ENCODE measurements at regions of chr16 and their contacts with region 1.

Region 1: GRCh38 chr16:69166221-69166833 is 20.6 kb upstream of the SNTB2 start:
- DNase-seq: peak; percentile 67
- ATAC-seq: peak; percentile 96
- H3K4me3 Mint-ChIP-seq: no peak overlapping the region
- H3K27ac Mint-ChIP-seq: peak overlapping the region; percentile 78
- H3K4me1 Mint-ChIP-seq: peaks cover 27% of the 10 kb centered on the region
- H3K27me3 Mint-ChIP-seq: no peaks in the 10 kb centered on the region

Region 2: DNA sequence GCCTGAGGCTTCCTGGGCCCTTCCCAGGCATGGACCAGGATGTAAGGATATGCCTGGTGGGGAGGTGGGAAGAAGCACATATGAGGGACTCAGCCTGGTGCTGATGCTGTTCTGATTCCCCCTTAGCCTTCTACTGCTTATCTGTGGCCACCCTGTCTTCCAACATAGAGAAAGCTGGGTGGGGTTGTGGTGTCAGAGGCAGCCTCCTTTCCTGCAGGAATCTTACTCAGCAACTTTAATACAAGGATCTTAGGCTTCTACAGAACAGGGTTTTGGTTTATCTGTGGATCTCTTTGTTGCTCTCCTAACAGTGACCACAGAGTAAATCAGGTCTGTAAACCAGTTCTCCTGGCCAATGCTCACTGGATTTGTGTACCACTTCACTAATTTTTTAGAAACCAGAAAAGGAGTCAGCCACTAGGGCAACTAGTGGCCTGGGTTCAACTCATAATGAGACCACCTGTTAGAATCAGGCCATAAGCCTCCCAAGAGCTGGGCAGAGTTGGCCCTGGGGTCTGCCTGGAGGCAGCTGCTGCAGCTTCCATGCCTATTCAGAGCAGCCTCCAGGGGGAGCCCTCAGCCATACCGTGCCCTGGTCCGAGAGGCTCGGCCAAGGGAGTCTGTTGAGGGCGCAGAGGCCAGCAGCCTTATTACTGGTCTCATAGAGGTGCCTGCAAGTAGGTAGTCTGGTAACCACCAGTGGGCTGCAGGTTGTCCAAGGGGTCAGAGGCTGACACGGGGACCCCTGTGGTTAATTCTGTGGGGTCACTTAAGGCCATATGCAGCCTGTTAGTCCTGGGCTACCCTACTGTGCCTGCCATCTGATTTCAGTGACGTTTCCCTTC is 53.8 kb before region 1 on chr16:
- CTCF ChIA-PET with region 1: interaction called, 10 read pairs
- POLR2A ChIA-PET with region 1: no interaction called
- DNase-seq: peak; percentile 61
- ATAC-seq: peak; percentile 72
- H3K4me3 Mint-ChIP-seq: no peak overlapping the region
- H3K27ac Mint-ChIP-seq: no peak overlapping the region
- H3K4me1 Mint-ChIP-seq: peaks cover 8% of the 10 kb centered on the region
- H3K27me3 Mint-ChIP-seq: peaks cover 8% of the 10 kb centered on the region

Region 3: GRCh38 chr16:69186642-69187445 is 20.5 kb after region 1 on chr16 and contains the start of gene SNTB2:
- CTCF ChIA-PET with region 1: interaction called, 19 read pairs
- POLR2A ChIA-PET with region 1: interaction called, 6 read pairs
- DNase-seq: peak; percentile 90
- ATAC-seq: peak; percentile 84
- H3K4me3 Mint-ChIP-seq: peak within 1 kb of the TSS; percentile 95
- H3K27ac Mint-ChIP-seq: peak within 1 kb of the TSS; percentile 99
- H3K4me1 Mint-ChIP-seq: peaks cover 50% of the 10 kb centered on the region
- H3K27me3 Mint-ChIP-seq: no peaks in the 10 kb centered on the region
- total RNA-seq, gene SNTB2: 24.3 to 25.5 TPM

Region 4: DNA sequence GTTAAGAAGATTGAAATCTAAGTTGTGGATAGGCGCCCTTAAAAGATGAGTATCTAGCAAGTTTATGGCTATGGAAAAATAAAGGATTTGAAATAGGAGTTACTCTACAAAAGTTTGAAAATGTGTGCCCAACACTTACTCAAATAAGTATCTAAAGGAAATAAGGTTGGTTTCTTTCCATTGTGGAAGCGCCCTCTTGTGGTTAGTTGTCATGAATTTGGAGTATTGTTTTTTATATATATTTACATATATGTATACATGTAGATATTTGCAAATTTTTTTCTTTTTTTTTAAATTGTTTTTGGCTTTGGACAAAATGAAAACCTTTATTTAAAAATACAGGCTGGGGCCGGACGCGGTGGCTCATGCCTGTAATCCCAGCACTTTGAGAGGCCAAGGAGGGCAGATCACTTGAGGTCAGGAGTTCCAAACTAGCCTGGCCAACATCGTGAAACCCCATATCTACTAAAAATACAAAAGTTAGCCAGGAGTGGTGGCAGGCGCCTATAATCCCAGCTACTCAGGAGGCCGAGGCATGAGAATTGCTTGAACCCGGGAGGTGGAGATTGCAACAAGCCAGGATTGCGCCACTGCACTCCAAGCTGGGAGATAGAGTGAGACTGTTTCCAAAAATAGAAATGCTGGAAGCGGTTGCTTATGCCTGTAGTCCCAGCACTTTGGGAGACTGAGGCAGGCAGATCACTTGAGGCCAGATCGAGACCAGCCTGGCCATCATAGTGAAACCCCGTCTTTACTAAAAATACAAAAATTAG is 120.8 kb after region 1 on chr16:
- CTCF ChIA-PET with region 1: interaction called, 12 read pairs
- POLR2A ChIA-PET with region 1: no interaction called
- DNase-seq: peak; percentile 69
- ATAC-seq: peak; percentile 53
- H3K4me3 Mint-ChIP-seq: no peak overlapping the region
- H3K27ac Mint-ChIP-seq: no peak overlapping the region
- H3K4me1 Mint-ChIP-seq: peaks cover 2% of the 10 kb centered on the region
- H3K27me3 Mint-ChIP-seq: no peaks in the 10 kb centered on the region

Measured in activated CD8-positive, alpha-beta T cell treated with anti-CD3 and anti-CD28 coated beads, Interleukin-2, amount 10 ng/mL, durations not matched to agents 7 days and 5 days (primary cell).